A549 (cell line): ENCODE measurements at regions of chr19 and their contacts with region 1.

Region 1: GRCh38 chr19:16185123-16185767 is at the start of gene FAM32A:
- DNase-seq: peak; percentile 98 to 99
- ATAC-seq: peak; percentile 94
- H3K4me3 ChIP-seq: peak within 1 kb of the TSS; percentile 96
- H3K27ac ChIP-seq: peak within 1 kb of the TSS; percentile 89 to 95
- H3K4me1 ChIP-seq: 0 out of 3 replicates have a peak, but pooled peaks cover 4% of the 10 kb centered on the region
- CTCF ChIP-seq: no peak
- EP300 ChIP-seq: no peak
- POLR2A ChIP-seq: no peak
- RAD21 ChIP-seq: no peak
- polyA plus RNA-seq, gene FAM32A: 97.6 and 108 TPM in 2 replicates

Region 2: DNA sequence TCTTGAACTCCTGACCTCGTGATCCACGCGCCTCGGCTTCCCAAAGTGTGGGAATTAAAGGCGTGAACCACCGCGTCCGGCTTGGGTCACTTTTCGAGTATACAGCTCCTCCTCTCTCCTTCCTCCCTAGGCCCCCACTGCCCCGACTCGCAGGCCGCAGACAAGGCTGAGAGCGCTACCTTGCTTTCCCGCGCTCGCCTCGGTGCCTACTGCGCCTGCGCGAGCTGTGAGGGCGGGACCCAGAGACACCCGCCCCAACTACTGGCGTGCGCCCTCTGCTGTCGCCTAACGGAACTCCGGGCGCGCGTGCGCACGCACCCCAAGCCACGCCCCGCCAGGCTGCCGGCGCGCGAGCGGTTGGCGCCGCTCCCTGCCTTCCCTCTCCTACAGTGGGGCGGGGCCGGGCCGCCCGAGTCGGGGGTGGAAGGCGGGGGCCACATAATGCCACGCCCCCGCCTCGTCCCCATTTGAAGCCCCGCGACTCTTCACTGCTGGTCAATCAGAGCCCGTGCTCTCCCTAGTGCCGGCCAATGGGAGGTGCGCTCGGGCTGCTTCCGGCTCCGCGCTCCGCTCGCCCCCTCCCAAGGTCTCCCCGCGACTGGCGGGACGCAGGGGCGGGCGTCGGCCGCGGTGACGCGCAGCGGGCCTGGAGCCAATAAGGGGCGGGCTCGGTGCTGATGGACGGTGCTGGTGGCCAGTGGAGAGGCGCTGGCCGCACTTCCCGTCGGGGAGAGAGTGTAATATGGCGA is 73.9 kb before region 1 on chr19 and contains the start of gene RAB8A:
- CTCF ChIA-PET with region 1: interaction called, 10 read pairs
- POLR2A ChIA-PET with region 1: interaction called, 3 read pairs
- DNase-seq: peak; percentile 93 to 98
- ATAC-seq: peak; percentile 95 to 96
- H3K4me3 ChIP-seq: peak within 1 kb of the TSS; percentile 99
- H3K27ac ChIP-seq: peak within 1 kb of the TSS; percentile 96 to 98
- H3K4me1 ChIP-seq: peaks cover 20% of the 10 kb centered on the region
- CTCF ChIP-seq: peak; percentile 69
- EP300 ChIP-seq: no peak
- POLR2A ChIP-seq: peak; percentile 50
- RAD21 ChIP-seq: peak; percentile 52 to 73
- polyA plus RNA-seq, gene RAB8A: 69.4 and 91.4 TPM in 2 replicates

Region 3: DNA sequence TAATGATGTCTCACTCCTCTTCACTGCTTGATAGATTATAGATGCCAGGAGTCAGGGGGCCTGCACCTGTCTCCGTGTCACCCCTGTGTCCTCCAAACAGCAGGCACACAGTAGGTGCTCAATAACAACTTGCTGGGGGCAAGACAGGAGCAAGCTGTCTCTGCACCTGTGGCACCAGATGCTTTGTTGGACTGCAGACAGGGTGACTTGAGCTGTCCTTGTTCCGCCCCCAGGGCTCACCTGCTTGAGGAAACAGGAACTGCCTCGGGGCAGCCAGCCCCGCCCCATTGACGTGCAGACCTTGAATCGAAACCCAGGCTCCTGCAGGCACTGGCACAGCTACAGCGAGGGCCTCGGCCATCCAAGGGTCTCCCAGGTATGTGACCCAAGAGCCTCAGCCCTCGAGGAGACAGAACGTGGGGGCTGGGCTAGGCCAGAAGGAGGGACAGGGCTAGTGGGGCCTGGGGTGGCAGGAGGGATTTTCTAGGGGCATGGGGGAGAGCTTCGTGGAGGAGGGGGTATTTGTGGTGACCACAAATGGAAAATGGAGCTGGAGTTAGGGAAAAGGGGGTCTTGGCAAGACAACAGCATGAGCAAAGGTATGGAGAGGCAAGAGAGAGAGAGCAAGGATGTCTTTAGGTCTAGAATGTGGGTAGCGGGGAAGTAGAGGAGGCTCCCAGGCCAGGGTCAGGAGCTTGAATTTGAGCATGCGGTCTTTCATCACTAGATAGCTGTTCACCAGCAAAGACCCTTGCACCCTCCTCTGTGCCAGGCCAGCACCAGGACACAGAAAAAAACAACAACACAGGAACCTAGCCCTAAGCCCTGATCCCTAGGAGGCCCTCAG is 41.6 kb before region 1 on chr19 and contains the start of gene HSH2D:
- CTCF ChIA-PET with region 1: no interaction called
- POLR2A ChIA-PET with region 1: no interaction called
- DNase-seq: no peak
- ATAC-seq: no peak
- H3K4me3 ChIP-seq: no peak within 1 kb of the TSS
- H3K27ac ChIP-seq: no peak within 1 kb of the TSS
- H3K4me1 ChIP-seq: no peaks in the 10 kb centered on the region
- CTCF ChIP-seq: no peak
- EP300 ChIP-seq: no peak
- POLR2A ChIP-seq: no peak
- RAD21 ChIP-seq: no peak
- polyA plus RNA-seq, gene HSH2D: 0.05 and 0.16 TPM in 2 replicates

Region 4: DNA sequence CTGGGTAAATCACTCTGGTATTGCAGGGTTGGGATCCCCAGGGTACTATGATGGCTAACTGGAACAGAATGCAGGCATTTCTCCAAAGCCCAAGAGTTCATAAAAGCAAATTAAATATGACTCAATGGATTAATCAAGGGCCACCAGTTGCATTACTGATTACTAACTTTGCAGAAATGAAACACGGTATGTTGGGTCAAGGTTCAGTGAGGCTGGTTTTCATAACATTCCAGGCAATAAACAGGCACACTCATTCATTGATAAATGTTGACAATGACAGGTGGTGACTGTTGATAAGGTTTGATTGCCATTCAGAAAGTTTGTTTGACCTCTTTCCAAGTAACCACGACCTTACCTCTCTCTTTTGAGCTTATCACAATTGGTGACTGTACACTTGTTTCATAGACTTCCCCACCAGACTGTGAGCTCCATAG is 12.0 kb after region 1 on chr19:
- CTCF ChIA-PET with region 1: interaction called, 14 read pairs
- POLR2A ChIA-PET with region 1: interaction called, 6 read pairs
- DNase-seq: no peak
- ATAC-seq: no peak
- H3K4me3 ChIP-seq: peak overlapping the region; percentile 88
- H3K27ac ChIP-seq: peak overlapping the region; percentile 96 to 98
- H3K4me1 ChIP-seq: peaks cover 27% of the 10 kb centered on the region
- CTCF ChIP-seq: no peak
- EP300 ChIP-seq: no peak
- POLR2A ChIP-seq: no peak
- RAD21 ChIP-seq: no peak